CD14-positive monocyte (primary cell): ENCODE measurements at regions of chr21 and their contacts with region 1.

Region 1: DNA sequence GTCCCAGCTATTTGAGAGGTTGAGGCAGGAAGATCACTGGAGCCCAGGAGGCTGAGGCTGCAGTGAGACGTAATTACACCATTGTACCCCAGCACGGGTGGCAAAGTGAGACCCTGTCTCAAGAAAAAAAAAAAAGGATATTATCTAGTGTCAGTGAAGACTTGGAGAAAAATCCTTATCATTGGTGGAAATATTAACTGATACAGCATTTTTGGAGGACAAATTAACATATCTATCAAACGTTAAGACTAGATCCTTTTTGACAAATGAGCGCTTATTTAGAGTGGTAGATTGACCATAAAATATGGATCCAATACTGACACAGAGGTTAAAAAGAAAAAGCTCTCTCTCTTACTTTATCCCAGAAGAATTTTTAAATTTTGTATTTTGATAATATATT is 35.2 kb upstream of the DYRK1A start:
- DNase-seq: no peak
- H3K4me3 ChIP-seq: no peak overlapping the region
- H3K4me3 Mint-ChIP-seq: no peak overlapping the region
- H3K27ac ChIP-seq: no peak overlapping the region
- H3K27ac Mint-ChIP-seq: no peak overlapping the region
- H3K4me1 ChIP-seq: no peaks in the 10 kb centered on the region
- H3K4me1 Mint-ChIP-seq: peaks cover 2% of the 10 kb centered on the region
- H3K27me3 ChIP-seq: no peaks in the 10 kb centered on the region
- H3K27me3 Mint-ChIP-seq: peaks cover 0 to 2% (median 0%) of the 10 kb centered on the region in 3 donors
- CTCF ChIP-seq: no peak

Region 2: GRCh38 chr21:37300114-37300746 is 31.2 kb before region 1 on chr21:
- intact Hi-C with region 1: loop called in 1 of 2 experiments (anchors 2 kb)
- DNase-seq: no peak
- H3K4me3 ChIP-seq: no peak overlapping the region
- H3K4me3 Mint-ChIP-seq: no peak overlapping the region
- H3K27ac ChIP-seq: no peak overlapping the region
- H3K27ac Mint-ChIP-seq: peak overlapping the region in 1 of 7 donors; percentile 60
- H3K4me1 ChIP-seq: no peaks in the 10 kb centered on the region
- H3K4me1 Mint-ChIP-seq: no peaks in the 10 kb centered on the region
- H3K27me3 ChIP-seq: no peaks in the 10 kb centered on the region
- H3K27me3 Mint-ChIP-seq: peaks cover 3 to 4% (median 3%) of the 10 kb centered on the region in 3 donors
- CTCF ChIP-seq: no peak